Pancreas (tissue), 10 donors: ENCODE measurements at regions of chr1 and their contacts with region 1.

Region 1: GRCh38 chr1:6889875-6890480 is 104.7 kb downstream of the CAMTA1 start:
- DNase-seq: peak in 4 of 6 donors; percentile 36 to 74 (median 50)
- ATAC-seq: peak; percentile 69 to 98 (median 94)
- H3K4me3 ChIP-seq: no peak overlapping the region
- H3K27ac ChIP-seq: no peak overlapping the region
- H3K4me1 ChIP-seq: no peaks in the 10 kb centered on the region
- H3K27me3 ChIP-seq: no peaks in the 10 kb centered on the region
- CTCF ChIP-seq: peak; percentile 63 to 86 (median 81)

Region 2: DNA sequence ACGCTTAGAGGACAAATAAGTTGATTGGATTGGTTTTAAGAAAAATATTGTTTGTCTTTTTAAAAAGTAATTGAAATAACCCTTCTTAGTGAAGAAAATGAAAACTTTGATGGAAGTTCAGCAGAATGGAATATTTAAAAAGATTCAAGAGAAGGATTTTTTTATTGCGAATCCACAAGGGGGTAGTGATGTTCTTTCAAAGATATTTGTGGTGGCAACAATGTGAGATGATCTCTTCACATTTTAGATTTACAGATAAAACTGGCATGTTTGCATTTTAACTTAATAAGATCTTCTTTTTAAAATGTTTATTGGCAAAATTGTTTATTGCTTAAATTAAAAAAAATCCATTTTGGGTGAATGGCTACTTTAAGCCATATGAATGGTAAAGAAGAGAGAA is 95.8 kb before region 1 on chr1:
- intact Hi-C with region 1: loop called in 2 of 3 experiments (anchors 5 to 10 kb)
- DNase-seq: no peak
- ATAC-seq: peak in 2 of 4 donors; percentile 49 to 53
- H3K4me3 ChIP-seq: no peak overlapping the region
- H3K27ac ChIP-seq: no peak overlapping the region
- H3K4me1 ChIP-seq: peaks cover 5 to 18% (median 8%) of the 10 kb centered on the region in 3 donors
- H3K27me3 ChIP-seq: no peaks in the 10 kb centered on the region
- CTCF ChIP-seq: peak in 2 of 4 donors; percentile 25 to 30

Region 3: GRCh38 chr1:7040969-7041695 is 151.2 kb after region 1 on chr1:
- intact Hi-C with region 1: no loop called
- DNase-seq: no peak
- ATAC-seq: no peak
- H3K4me3 ChIP-seq: no peak overlapping the region
- H3K27ac ChIP-seq: no peak overlapping the region
- H3K4me1 ChIP-seq: no peaks in the 10 kb centered on the region
- H3K27me3 ChIP-seq: no peaks in the 10 kb centered on the region
- CTCF ChIP-seq: no peak